Astrocyte of the cerebellum (primary cell): ENCODE measurements at regions of chr18 and their contacts with region 1.

Region 1: DNA sequence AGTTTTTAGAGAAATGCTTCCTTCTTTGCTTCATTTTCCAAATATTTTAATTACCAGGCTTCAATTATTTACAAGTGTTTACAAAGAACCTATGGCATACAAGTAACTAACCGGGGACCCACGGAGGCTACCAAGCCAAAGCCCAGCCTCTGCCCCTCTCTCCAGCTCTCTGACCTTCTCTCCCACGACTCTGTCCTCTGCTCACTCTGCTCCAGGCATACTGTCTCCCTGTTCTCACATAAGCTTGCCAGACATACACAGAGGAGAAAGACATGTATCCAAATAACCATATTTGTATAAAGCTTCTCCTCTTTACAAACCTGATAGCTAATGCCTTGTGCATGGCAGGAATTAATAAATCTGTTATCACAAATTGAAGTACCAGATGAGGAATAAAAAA is 141.3 kb downstream of the ZNF521 start:
- DNase-seq: no peak
- H3K4me3 ChIP-seq: no peak overlapping the region
- CTCF ChIP-seq: no peak

Region 2: DNA sequence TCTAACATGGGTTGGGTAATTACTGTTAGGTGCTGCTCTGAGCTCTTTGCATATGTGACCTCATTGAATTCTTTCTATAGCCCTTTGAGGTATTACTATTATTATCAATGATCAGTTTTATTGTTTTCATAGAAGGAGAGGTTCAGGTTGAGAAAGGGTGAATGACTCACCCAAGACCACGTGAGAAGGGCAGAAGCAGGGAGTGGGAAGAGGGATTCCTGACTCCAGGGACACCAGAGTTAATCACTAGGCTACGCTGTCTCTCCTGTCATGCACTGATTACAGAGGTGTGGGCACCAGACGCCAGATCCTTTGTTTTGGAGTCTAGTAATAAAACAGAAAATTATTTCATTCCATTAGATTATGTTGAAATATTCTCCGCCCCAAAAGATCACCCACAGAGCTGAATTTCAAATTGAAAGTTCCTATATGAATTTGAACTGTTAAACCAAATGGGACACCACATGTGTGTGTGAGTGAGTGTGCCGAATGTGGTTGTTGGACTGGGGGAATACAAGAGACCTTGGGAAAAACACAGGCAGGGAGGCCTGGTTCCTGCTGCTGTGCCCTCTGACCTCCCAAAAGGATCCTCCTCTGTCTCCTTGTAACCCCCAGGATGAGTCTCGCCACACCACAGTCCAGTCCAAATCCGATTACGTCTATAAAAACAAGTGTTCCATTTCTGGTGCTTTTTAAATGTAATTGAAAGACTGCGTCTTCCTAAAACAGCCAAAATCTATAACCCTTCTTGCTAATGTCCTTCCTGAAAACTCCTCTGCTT is 74.0 kb before region 1 on chr18:
- in situ Hi-C with region 1: no loop called
- DNase-seq: no peak
- H3K4me3 ChIP-seq: no peak overlapping the region
- CTCF ChIP-seq: no peak

Region 3: GRCh38 chr18:25147877-25148488 is 62.6 kb before region 1 on chr18:
- in situ Hi-C with region 1: no loop called
- DNase-seq: no peak
- H3K4me3 ChIP-seq: no peak overlapping the region
- CTCF ChIP-seq: no peak

Region 4: GRCh38 chr18:25284861-25285550 is 74.4 kb after region 1 on chr18:
- in situ Hi-C with region 1: loop called (anchors 5 kb)
- DNase-seq: no peak
- H3K4me3 ChIP-seq: no peak overlapping the region
- CTCF ChIP-seq: no peak